Naive thymus-derived CD4-positive, alpha-beta T cell (primary cell): ENCODE measurements at regions of chr9 and their contacts with region 1.

Region 1: DNA sequence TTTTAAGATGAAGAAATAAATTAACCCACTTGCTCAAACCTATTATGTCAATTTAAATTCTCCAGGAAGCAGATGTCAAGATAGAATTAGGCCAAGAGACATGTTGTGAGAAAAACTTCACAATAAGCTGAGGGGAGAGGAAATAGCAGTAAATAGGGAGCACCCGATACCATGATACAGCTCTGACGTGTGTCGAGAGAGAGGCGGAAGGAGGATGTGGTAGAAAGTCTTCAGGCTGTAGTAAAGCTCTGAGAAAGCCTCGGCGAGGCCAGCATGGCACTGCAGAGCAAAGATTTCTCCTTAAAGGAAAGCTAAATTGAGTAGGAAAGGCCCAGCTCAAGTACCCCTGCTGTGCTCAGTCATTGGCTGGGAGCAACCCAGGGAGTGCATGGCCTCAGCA is 6.0 kb upstream of the PUM3 start:
- DNase-seq: peak in 3 of 9 donors; percentile 22 to 34 (median 29)
- ATAC-seq: peak; percentile 79
- H3K4me3 ChIP-seq: no peak overlapping the region
- H3K4me3 Mint-ChIP-seq: no peak overlapping the region
- H3K27ac ChIP-seq: no peak overlapping the region
- H3K27ac Mint-ChIP-seq: peak overlapping the region in 4 of 9 donors; percentile 17 to 82 (median 42)
- H3K4me1 ChIP-seq: peaks cover 5% of the 10 kb centered on the region in 2 donors
- H3K4me1 Mint-ChIP-seq: peaks cover 5 to 16% (median 9%) of the 10 kb centered on the region in 7 donors
- H3K27me3 ChIP-seq: no peaks in the 10 kb centered on the region
- H3K27me3 Mint-ChIP-seq: peaks cover 1 to 17% (median 13%) of the 10 kb centered on the region in 5 donors

Region 2: DNA sequence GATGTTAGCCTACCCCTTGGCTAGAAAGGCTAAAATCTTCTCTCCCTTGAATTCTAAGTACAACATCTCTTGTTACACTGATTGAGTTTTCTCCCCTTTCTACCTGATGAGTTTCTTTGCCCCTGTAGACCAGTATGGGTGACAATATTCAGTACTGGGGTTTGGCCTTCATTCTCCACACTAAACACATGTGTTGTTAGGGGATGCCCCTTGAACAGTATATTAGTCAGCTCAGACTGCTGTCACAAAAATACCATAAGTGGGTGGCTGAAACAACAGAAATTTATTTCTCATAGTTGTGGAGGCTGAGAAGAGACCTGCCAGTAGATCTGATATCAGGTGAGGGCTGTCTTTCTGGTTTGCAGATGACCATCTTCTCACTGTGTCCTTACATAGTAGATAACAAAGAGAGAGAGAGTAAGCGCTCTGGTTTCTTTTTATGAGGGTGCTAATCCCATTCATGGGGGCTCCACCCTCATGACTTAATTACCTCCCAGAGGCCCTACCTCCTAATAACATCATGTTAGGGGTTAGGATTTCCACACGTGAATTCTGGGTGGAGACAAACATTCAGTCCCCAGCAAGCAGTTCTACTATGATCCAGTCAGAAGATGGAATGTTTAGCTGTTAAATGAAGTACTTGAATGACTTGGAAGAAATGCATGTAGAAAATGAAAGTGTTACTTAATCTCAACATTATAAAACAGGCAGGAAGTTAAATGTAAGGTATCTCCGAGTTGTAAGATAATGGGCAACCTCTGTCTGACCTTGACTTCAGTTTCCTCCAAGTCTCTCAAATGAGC is 210.9 kb before region 1 on chr9:
- CTCF ChIA-PET with region 1: no interaction called
- POLR2A ChIA-PET with region 1: no interaction called
- intact Hi-C with region 1: no loop called
- DNase-seq: no peak
- ATAC-seq: no peak
- H3K4me3 ChIP-seq: no peak overlapping the region
- H3K4me3 Mint-ChIP-seq: no peak overlapping the region
- H3K27ac ChIP-seq: no peak overlapping the region
- H3K27ac Mint-ChIP-seq: no peak overlapping the region
- H3K4me1 ChIP-seq: no peaks in the 10 kb centered on the region
- H3K4me1 Mint-ChIP-seq: peaks cover 0 to 16% (median 0%) of the 10 kb centered on the region in 7 donors
- H3K27me3 ChIP-seq: no peaks in the 10 kb centered on the region
- H3K27me3 Mint-ChIP-seq: peaks cover 0 to 12% (median 9%) of the 10 kb centered on the region in 5 donors

Region 3: GRCh38 chr9:2809691-2810433 is 40.1 kb before region 1 on chr9:
- CTCF ChIA-PET with region 1: no interaction called
- POLR2A ChIA-PET with region 1: no interaction called
- intact Hi-C with region 1: no loop called
- DNase-seq: no peak
- ATAC-seq: no peak
- H3K4me3 ChIP-seq: no peak overlapping the region
- H3K4me3 Mint-ChIP-seq: no peak overlapping the region
- H3K27ac ChIP-seq: no peak overlapping the region
- H3K27ac Mint-ChIP-seq: no peak overlapping the region
- H3K4me1 ChIP-seq: no peaks in the 10 kb centered on the region
- H3K4me1 Mint-ChIP-seq: no peaks in the 10 kb centered on the region
- H3K27me3 ChIP-seq: no peaks in the 10 kb centered on the region
- H3K27me3 Mint-ChIP-seq: no peaks in the 10 kb centered on the region

Region 4: GRCh38 chr9:2824564-2824963 is 25.4 kb before region 1 on chr9:
- CTCF ChIA-PET with region 1: no interaction called
- POLR2A ChIA-PET with region 1: no interaction called
- intact Hi-C with region 1: loop called in 1 of 2 experiments (anchors 2 kb)
- DNase-seq: no peak
- ATAC-seq: peak; percentile 22
- H3K4me3 ChIP-seq: no peak overlapping the region
- H3K4me3 Mint-ChIP-seq: no peak overlapping the region
- H3K27ac ChIP-seq: no peak overlapping the region
- H3K27ac Mint-ChIP-seq: peak overlapping the region in 2 of 9 donors; percentile 12 to 15
- H3K4me1 ChIP-seq: no peaks in the 10 kb centered on the region
- H3K4me1 Mint-ChIP-seq: peaks cover 0 to 4% (median 0%) of the 10 kb centered on the region in 7 donors
- H3K27me3 ChIP-seq: no peaks in the 10 kb centered on the region
- H3K27me3 Mint-ChIP-seq: no peaks in the 10 kb centered on the region

Region 5: GRCh38 chr9:2889023-2889422 is 39.1 kb after region 1 on chr9:
- CTCF ChIA-PET with region 1: no interaction called
- POLR2A ChIA-PET with region 1: no interaction called
- intact Hi-C with region 1: no loop called
- DNase-seq: no peak
- ATAC-seq: no peak
- H3K4me3 ChIP-seq: no peak overlapping the region
- H3K4me3 Mint-ChIP-seq: no peak overlapping the region
- H3K27ac ChIP-seq: no peak overlapping the region
- H3K27ac Mint-ChIP-seq: no peak overlapping the region
- H3K4me1 ChIP-seq: no peaks in the 10 kb centered on the region
- H3K4me1 Mint-ChIP-seq: no peaks in the 10 kb centered on the region
- H3K27me3 ChIP-seq: no peaks in the 10 kb centered on the region
- H3K27me3 Mint-ChIP-seq: peaks cover 5 to 32% (median 24%) of the 10 kb centered on the region in 5 donors